Posterior cingulate gyrus (tissue), 11 donors: ENCODE measurements at regions of chr15 and their contacts with region 1.

Region 1: DNA sequence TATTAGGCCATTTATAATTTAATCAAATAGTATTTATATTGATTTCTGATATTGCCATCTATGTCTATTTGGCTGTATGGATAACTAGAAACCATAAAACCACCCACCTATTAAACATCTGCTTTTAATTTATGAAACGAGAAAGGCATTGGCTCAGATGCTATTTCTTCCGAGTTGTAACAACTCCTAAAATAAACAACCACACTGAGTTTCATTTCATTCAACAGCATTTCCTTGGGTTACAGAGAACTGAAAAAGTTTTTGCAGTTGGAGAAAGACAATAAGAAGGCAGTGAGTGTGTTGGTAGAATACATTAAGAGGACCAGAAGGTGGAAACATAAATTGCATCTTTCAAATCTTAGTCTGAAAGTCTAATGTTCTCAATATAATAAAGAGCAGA is 79.1 kb downstream of the AQR start:
- DNase-seq: no peak

Region 2: DNA sequence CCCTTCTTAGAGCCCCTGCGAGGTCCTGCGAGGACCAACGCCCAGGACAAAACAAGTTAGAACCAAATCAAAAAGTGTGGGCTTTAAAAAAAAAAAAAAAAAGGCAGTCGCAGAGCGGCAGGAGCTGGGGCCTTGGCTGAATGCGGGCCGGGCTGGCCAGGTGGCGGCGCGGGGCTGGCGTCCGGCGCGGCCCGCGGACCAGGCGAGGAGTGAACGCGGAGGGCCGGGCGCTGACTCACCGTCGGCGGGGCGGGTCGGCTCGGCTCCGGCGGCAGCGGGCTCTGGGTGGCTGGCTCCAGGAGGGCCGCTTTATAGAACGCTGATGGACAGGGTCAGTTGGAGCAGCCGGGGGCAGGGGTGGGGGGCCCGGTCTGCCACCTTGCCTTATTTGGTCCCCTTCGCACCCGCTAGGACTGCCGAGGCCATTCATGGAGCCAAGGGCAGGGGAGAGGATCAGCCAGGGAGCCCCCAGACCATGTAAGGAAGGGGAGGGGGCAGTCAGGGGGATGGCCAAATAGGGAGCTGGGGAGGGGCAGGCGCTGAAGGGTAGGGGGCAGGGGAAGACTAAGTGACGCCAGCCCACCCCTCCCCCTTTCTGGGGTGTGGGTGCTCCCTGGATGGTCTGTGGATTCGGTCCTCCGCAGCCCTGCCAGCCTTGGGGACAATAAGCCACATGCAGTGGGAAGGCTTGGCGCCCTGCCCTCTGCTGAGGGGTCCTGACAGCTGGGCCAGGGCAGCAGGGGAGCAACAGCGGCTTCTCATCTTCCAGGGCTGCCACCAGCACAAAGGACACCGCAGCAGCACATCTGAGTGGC is 95.0 kb before region 1 on chr15 and contains the start of gene ACTC1:
- intact Hi-C with region 1: loop called (anchors 10 kb)
- DNase-seq: peak in 7 of 10 donors; percentile 19 to 87 (median 38)

Region 3: DNA sequence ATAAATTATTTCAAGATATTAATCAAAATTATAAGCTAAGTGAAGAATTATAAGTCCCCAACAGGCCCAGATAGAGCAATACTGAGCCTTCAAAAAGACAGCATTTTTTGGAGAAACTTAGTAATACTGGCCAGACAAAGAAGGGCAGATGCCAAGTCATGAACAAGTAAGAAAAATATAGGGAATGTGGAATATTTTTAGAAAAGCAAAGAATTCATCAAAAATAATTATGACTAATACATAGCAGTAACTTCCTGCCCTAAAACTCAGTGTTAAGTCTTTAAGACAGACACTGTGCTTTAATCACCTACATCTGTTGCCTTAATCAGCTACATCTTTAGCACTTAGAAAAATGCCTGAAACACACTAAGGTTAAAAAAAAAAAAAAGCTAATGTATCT is 624.3 kb after region 1 on chr15:
- intact Hi-C with region 1: no loop called
- DNase-seq: no peak